Psoas muscle (tissue), 8 donors: ENCODE measurements at regions of chr21 and their contacts with region 1.

Region 1: GRCh38 chr21:20283836-20284235 is 714.4 kb upstream of the NCAM2 start:
- DNase-seq: no peak
- ATAC-seq: no peak
- H3K4me3 ChIP-seq: no peak overlapping the region
- H3K27ac ChIP-seq: no peak overlapping the region
- H3K4me1 ChIP-seq: no peaks in the 10 kb centered on the region
- H3K27me3 ChIP-seq: no peaks in the 10 kb centered on the region
- CTCF ChIP-seq: no peak

Region 2: GRCh38 chr21:20040768-20041167 is 243.1 kb before region 1 on chr21:
- intact Hi-C with region 1: no loop called
- DNase-seq: no peak
- ATAC-seq: no peak
- H3K4me3 ChIP-seq: no peak overlapping the region
- H3K27ac ChIP-seq: no peak overlapping the region
- H3K4me1 ChIP-seq: no peaks in the 10 kb centered on the region
- H3K27me3 ChIP-seq: no peaks in the 10 kb centered on the region
- CTCF ChIP-seq: no peak

Region 3: GRCh38 chr21:20272791-20273362 is 11.0 kb before region 1 on chr21:
- intact Hi-C with region 1: loop called in 1 of 2 experiments (anchors 1 kb)
- DNase-seq: no peak
- ATAC-seq: no peak
- H3K4me3 ChIP-seq: no peak overlapping the region
- H3K27ac ChIP-seq: no peak overlapping the region
- H3K4me1 ChIP-seq: no peaks in the 10 kb centered on the region
- H3K27me3 ChIP-seq: no peaks in the 10 kb centered on the region
- CTCF ChIP-seq: no peak